GM23248 (cell line): ENCODE measurements at regions of chr9 and their contacts with region 1.

Region 1: GRCh38 chr9:21812946-21813568 is 10.6 kb downstream of the MTAP start:
- DNase-seq: peak; percentile 81
- H3K4me3 ChIP-seq: no peak overlapping the region
- H3K27ac ChIP-seq: peak overlapping the region; percentile 67
- H3K4me1 ChIP-seq: peaks cover 50% of the 10 kb centered on the region
- H3K27me3 ChIP-seq: no peaks in the 10 kb centered on the region

Region 2: GRCh38 chr9:21653091-21653490 is 160.0 kb before region 1 on chr9:
- in situ Hi-C with region 1: no loop called
- DNase-seq: peak; percentile 71
- H3K4me3 ChIP-seq: no peak overlapping the region
- H3K27ac ChIP-seq: no peak overlapping the region
- H3K4me1 ChIP-seq: peaks cover 37% of the 10 kb centered on the region
- H3K27me3 ChIP-seq: no peaks in the 10 kb centered on the region

Region 3: DNA sequence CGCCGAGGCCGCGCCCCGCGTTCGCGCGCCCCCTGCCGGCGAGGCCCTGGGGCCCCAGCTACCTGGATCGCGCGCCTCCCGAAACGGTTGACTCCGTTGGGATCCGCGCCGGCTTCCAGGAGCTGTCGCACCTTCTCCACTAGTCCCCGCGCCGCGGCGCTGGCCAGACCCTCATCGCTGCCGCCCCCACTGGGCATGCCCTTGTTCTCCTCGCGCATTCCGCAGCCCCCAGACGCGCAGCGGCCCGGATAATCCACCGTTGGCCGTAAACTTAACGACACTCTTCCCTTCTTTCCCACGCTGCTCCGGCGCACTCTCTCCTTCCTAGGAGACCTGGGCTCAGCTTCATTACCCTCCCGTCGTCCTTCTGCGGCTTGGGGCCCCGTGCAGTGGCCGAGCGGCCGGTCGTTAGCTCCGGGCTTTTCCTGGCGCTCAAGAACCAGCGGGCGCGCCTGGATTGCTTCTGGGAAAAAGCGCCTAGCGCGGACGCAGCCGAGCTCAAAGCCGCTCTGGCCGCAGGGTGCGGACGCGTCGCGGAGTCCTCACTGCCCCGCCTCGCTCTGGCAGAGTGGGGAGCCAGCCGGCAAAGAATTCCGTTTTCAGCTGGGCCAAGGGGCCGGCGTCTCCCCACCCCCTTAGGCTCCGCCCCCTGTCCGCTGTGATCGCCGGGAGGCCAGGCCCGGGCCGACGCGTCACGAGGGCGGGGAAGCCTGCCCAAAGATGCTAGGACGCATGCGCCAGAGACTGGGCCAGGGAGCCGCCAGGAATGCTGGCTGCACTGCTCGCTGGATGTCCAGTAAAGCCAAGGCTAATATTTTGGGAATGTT is 195.9 kb after region 1 on chr9 and contains the start of gene CDKN2B:
- in situ Hi-C with region 1: loop called (anchors 10 kb)
- DNase-seq: peak; percentile 98
- H3K4me3 ChIP-seq: peak within 1 kb of the TSS; percentile 94
- H3K27ac ChIP-seq: peak within 1 kb of the TSS; percentile 94
- H3K4me1 ChIP-seq: peaks cover 25% of the 10 kb centered on the region
- H3K27me3 ChIP-seq: no peaks in the 10 kb centered on the region
- total RNA-seq, gene CDKN2B: 5.3 and 10.6 TPM in 2 replicates

Region 4: DNA sequence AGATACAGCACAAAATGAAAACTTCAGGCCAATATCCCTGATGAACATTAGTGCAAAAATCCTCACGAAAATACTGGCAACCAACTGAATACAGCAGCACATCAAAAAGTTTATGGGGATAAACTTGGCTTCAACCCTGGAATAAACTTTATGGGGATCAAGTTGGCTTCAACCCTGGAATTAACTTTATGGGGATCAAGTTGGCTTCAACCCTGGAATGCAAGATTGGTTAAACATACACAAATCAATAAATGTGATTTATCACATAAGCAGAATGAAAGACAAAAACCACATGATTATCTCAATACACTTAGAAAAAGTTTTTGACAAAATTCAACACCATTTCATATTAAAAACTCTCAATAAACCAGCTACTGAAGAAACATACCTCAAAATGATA is 419.9 kb after region 1 on chr9:
- in situ Hi-C with region 1: loop called (anchors 5 kb)
- DNase-seq: no peak
- H3K4me3 ChIP-seq: no peak overlapping the region
- H3K27ac ChIP-seq: no peak overlapping the region
- H3K4me1 ChIP-seq: peaks cover 9% of the 10 kb centered on the region
- H3K27me3 ChIP-seq: no peaks in the 10 kb centered on the region

Region 5: DNA sequence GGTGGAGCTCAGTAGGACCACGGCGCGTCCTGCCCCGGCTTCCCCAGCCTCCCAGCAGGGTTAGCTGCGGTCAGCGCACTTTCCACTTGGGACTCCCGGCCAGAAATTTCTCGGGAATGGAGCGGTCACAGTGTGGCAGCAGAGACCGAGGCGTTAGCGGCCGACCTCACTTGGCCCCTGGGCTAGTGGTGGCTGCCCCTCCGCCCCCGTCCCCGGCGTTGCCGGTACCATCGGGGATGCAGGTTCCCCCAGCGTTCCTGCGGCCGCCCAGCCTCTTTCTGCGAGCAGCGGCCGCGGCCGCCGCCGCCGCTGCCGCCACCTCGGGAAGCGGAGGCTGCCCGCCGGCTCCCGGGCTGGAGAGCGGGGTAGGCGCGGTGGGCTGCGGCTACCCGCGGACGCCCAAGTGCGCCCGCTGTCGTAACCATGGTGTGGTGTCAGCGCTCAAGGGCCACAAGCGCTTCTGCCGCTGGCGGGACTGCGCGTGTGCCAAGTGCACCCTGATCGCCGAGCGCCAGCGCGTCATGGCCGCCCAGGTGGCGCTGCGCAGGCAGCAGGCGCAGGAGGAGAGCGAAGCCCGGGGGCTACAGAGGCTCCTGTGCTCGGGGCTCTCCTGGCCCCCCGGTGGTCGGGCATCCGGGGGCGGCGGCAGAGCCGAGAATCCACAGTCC is 634.0 kb after region 1 on chr9:
- in situ Hi-C with region 1: loop called (anchors 10 kb)
- DNase-seq: peak; percentile 60
- H3K4me3 ChIP-seq: peak overlapping the region; percentile 80
- H3K27ac ChIP-seq: no peak overlapping the region
- H3K4me1 ChIP-seq: 0 out of 2 replicates have a peak, but pooled peaks cover 5% of the 10 kb centered on the region
- H3K27me3 ChIP-seq: peaks cover 53% of the 10 kb centered on the region